ENCODE measurements at regions of chr4 and their contacts with region 1.

Region 1: DNA sequence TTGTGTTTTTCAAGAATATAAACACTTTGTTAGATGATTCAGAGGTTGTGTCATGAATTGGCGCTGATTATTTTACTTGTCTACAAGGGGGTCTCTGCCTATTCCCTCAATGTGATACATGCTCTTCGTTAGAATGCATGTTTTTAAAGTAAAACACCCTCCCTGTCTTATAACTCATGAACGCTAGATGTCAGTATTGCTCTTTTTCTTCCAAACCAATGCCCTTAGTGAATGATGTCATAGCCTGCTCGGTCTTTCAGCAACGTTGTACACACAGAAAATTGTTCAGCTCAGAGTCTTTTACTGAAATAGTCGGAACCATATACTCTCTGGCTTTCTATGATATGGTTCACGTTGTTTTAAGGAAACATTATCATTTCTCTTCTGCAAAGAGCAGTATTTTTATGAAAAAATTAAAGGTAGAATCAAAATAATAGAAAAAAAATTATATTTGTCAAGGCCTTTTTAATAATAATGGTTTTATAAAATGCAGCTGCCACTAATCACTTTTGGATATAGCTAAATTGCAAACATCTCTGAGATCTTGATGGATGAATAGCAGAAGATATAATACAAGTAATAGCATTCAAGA is 292.9 kb downstream of the TLL1 start:
- DNase-seq: peak; percentile 82
- ATAC-seq: peak; percentile 80
- H3K4me3 ChIP-seq: no peak overlapping the region
- H3K27ac ChIP-seq: no peak overlapping the region
- H3K4me1 ChIP-seq: no peaks in the 10 kb centered on the region; the same call in 1 of the 2 replicates
- H3K27me3 ChIP-seq: no peaks in the 10 kb centered on the region
- CTCF ChIP-seq: peak; percentile 75

Region 2: DNA sequence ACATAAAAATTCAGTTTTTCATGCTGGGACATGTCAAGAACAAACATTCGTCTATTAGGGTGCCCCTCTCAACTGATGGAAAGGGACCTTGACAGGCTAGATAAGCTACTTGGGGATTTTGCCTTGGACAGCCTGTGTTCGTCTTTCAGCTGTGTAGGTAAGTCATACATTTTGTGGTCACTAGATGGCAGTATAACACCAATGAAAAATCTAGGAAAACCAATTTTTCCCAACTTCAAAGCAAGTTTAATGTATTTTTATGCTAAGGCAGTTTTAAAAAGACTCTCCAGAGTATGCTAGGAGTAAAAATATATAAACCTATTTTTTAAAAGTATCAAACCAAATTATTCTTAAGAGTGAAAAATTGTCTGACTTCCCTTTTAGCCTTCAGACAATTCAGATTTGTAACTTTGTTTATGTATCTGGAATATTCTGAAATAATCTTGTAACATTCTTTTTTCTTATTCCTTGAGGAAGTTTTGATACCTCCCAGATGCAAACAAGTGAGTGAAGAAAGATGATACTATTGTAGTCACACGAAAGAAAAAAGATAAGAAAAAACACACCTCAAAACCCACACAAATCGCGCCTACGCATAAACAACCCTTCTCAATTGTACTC is 628.8 kb before region 1 on chr4:
- CTCF ChIA-PET with region 1: no interaction called
- POLR2A ChIA-PET with region 1: no interaction called
- intact Hi-C with region 1: loop called (anchors 5 kb)
- DNase-seq: peak; percentile 77
- ATAC-seq: peak; percentile 43; the same call in 1 of the 2 replicates
- H3K4me3 ChIP-seq: no peak overlapping the region
- H3K27ac ChIP-seq: no peak overlapping the region
- H3K4me1 ChIP-seq: no peaks in the 10 kb centered on the region
- H3K27me3 ChIP-seq: no peaks in the 10 kb centered on the region
- CTCF ChIP-seq: peak; percentile 65

Region 3: DNA sequence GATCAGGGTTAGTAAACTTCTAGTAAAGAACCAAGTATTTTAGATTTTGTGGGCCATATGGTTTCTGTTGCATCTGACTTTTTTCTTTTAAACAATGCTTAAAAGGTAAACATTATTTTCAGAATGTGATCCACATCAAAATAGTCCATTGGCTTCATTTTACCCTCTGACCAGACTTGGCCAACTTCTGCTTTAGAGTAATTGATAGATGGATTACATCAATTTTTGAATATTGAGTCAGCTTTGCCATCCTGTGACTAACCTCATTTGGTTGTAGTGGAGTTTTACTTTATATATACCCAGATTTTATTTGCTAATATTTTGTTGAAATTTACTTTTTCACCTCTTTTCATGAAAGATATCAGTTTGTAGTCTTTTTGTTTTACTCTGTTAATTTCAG is 266.9 kb after region 1 on chr4:
- CTCF ChIA-PET with region 1: no interaction called
- POLR2A ChIA-PET with region 1: no interaction called
- intact Hi-C with region 1: loop called (anchors 5 kb)
- DNase-seq: peak; percentile 80
- ATAC-seq: peak; percentile 8; the same call in 1 of the 2 replicates
- H3K4me3 ChIP-seq: no peak overlapping the region
- H3K27ac ChIP-seq: peak overlapping the region; percentile 99
- H3K4me1 ChIP-seq: peaks cover 69% of the 10 kb centered on the region
- H3K27me3 ChIP-seq: no peaks in the 10 kb centered on the region
- CTCF ChIP-seq: no peak

Region 4: DNA sequence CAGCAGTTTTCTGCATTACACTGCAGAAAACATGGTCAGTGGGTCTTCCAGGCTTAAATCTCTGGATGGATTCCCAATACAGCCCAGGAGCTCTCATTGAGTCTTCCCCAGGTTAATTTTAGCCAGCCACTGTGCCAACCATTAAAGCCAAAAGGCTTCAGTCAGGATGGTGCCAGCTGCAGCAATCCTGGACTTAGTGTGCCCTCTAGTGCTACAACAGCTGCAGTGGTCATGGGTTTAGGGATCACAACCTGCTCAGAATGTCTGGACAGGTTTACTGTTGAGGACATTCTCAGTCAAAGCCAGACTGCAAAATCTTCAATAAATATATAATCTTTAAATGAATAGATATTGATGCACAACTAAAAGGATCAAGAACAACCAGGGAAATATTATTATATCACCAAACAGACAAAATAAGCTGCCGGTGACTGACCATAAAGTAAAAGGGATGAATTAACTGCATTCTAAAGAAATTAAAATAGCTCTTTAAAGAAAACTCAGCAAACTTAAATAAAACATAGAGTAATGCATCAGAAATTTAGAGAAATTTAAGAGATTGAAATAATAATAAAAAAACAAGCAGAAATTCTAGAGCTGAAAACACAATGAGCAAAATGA is 428.5 kb after region 1 on chr4:
- CTCF ChIA-PET with region 1: interaction called, 7 read pairs
- POLR2A ChIA-PET with region 1: no interaction called
- intact Hi-C with region 1: loop called (anchors 1 kb)
- DNase-seq: peak; percentile 78
- ATAC-seq: peak; percentile 95
- H3K4me3 ChIP-seq: no peak overlapping the region
- H3K27ac ChIP-seq: no peak overlapping the region
- H3K4me1 ChIP-seq: no peaks in the 10 kb centered on the region
- H3K27me3 ChIP-seq: no peaks in the 10 kb centered on the region
- CTCF ChIP-seq: peak; percentile 82

Region 5: DNA sequence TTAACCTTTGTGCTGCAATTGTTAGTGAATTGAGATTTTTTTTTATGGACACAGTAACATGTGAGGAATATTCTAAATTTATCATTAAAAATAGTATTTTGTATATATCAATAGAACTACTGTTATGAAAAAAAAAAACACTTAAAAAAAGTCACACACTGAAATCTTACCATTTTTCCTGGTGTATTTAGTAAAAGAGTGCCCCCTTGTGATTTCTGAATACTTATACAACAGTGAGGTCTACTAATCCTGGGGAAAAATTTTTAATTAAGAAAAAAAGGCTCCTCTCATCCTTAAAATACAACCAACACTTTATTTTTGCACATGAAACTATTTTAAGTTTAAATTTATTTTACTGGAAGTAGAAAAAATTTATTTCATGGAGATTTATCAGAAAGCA is 1124.8 kb after region 1 on chr4:
- CTCF ChIA-PET with region 1: no interaction called
- POLR2A ChIA-PET with region 1: no interaction called
- intact Hi-C with region 1: loop called (anchors 5 kb)
- DNase-seq: peak; percentile 42
- ATAC-seq: no peak
- H3K4me3 ChIP-seq: no peak overlapping the region
- H3K27ac ChIP-seq: no peak overlapping the region
- H3K4me1 ChIP-seq: no peaks in the 10 kb centered on the region
- H3K27me3 ChIP-seq: no peaks in the 10 kb centered on the region
- CTCF ChIP-seq: peak; percentile 63